Mammary epithelial cell (primary cell): ENCODE measurements at regions of chr11 and their contacts with region 1.

Region 1: DNA sequence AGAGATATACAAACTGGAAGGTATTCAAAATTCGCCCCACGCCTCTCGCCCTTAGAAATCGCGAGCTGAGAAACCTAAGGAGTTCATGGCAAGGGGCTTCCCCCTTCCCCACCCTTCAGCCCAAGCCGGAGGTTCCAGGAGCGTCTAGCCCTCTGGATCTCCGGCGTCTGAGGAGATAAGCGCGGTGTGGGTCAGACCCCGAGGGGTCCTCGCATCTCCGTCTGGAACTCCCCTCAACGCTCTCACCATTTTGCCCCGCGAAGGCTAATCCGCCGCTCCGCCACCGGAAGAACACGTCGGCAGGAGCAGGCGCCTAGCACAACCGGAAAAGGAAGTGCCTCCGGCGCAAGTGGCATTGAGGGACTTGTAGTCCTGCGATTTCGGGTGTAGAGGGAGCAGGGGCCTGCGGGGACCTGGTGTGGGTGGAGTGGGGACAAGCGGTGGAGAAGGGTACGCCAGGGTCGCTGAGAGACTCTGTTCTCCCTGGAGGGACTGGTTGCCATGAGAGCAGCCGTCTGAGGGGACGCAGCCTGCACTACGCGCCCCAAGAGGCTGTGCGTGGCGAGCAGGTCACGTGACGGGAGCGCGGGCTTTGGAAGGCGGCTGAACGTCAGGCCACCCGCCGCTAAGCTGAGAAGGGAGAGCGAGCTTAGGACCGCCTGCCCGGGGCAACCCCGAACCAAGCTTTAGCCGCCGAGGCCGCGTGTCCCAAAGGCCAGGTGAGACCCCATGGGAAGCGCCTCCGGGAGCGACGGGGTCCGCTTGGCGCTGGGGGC is at the starts of genes FEN1 and TMEM258:
- DNase-seq: peak; percentile 95
- H3K4me3 ChIP-seq: peak within 1 kb of the TSS; percentile 63 to 93 (median 92)
- H3K27ac ChIP-seq: peak within 1 kb of the TSS; percentile 96
- H3K4me1 ChIP-seq: peaks cover 13% of the 10 kb centered on the region
- H3K27me3 ChIP-seq: no peaks in the 10 kb centered on the region
- CTCF ChIP-seq: no peak
- total RNA-seq, gene FEN1: 11.7 to 46.1 TPM
- total RNA-seq, gene TMEM258: 48.2 to 99.7 TPM

Region 2: GRCh38 chr11:61541598-61541997 is 250.9 kb before region 1 on chr11:
- CTCF ChIA-PET with region 1: no interaction called
- dilution Hi-C with region 1: no loop called
- in situ Hi-C with region 1: no loop called
- intact Hi-C with region 1: no loop called
- DNase-seq: no peak
- H3K4me3 ChIP-seq: no peak overlapping the region
- H3K27ac ChIP-seq: no peak overlapping the region
- H3K4me1 ChIP-seq: no peaks in the 10 kb centered on the region
- H3K27me3 ChIP-seq: no peaks in the 10 kb centered on the region
- CTCF ChIP-seq: no peak

Region 3: DNA sequence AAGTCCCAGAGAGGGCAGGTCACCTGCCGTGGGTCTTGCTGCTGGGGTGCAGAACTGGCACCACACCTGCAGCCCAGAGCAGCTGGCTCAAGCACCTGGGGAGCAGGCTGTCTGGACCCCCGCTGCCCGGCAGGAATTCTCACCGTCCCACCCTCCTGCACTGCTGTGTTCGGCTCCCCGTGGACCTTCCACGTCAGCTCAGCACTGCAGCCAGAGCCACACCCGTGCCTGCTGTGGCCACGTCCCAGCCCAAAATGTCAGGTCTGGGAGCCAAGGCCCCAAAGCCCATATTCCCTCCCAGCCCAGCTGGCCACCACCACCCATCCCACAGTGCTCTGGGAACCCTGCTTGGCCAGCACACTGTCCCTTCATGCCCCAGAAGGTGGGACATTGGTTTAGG is 68.1 kb before region 1 on chr11:
- CTCF ChIA-PET with region 1: no interaction called
- dilution Hi-C with region 1: loop called (anchors 5 kb)
- in situ Hi-C with region 1: no loop called
- intact Hi-C with region 1: no loop called
- DNase-seq: no peak
- H3K4me3 ChIP-seq: no peak overlapping the region
- H3K27ac ChIP-seq: no peak overlapping the region
- H3K4me1 ChIP-seq: peaks cover 27% of the 10 kb centered on the region
- H3K27me3 ChIP-seq: no peaks in the 10 kb centered on the region
- CTCF ChIP-seq: no peak

Region 4: DNA sequence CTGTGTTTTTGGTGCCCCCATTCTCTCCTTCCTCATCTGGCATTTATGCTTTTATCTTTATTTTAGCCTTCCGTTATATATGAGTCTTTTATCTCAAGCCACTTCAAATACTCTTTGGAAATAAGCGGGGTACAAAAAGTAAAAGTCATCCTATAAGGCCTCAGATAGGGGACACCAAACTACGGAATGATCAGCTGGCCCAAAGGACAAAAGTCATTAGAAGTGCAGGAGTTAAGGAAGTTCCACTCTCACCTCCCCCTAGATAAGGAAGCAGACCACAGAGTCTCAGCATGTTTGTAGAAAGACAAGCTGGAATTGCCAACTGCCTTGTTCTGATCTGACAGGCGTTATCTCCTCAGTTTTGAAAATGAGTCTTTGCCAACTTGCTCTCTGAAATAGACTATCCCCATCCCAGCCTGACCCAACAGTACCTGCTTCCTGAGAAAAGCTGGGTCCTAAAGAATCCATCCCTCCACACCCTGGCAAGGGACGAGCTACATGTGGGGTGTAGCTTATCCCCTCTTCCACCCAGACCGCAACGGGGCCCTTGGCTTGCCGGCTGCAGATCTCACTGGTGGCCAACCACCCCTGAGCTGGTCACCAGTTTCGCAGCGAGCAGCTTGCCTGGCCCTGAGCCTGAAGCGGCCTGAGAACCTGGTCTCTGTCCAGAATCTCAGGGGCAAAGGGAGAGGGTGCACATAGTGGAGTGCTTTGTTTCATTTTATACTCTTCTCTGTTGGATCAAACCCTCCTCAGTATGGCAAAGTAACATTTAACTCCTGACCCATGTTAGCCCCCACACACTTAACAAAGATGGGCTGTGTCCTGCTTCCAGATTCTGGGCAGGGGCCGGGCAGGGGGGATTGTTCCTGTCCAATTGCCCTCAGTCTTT is 49.4 kb after region 1 on chr11:
- CTCF ChIA-PET with region 1: no interaction called
- dilution Hi-C with region 1: no loop called
- in situ Hi-C with region 1: no loop called
- intact Hi-C with region 1: no loop called
- DNase-seq: no peak
- H3K4me3 ChIP-seq: no peak overlapping the region
- H3K27ac ChIP-seq: no peak overlapping the region
- H3K4me1 ChIP-seq: no peaks in the 10 kb centered on the region
- H3K27me3 ChIP-seq: no peaks in the 10 kb centered on the region
- CTCF ChIP-seq: no peak

Region 5: DNA sequence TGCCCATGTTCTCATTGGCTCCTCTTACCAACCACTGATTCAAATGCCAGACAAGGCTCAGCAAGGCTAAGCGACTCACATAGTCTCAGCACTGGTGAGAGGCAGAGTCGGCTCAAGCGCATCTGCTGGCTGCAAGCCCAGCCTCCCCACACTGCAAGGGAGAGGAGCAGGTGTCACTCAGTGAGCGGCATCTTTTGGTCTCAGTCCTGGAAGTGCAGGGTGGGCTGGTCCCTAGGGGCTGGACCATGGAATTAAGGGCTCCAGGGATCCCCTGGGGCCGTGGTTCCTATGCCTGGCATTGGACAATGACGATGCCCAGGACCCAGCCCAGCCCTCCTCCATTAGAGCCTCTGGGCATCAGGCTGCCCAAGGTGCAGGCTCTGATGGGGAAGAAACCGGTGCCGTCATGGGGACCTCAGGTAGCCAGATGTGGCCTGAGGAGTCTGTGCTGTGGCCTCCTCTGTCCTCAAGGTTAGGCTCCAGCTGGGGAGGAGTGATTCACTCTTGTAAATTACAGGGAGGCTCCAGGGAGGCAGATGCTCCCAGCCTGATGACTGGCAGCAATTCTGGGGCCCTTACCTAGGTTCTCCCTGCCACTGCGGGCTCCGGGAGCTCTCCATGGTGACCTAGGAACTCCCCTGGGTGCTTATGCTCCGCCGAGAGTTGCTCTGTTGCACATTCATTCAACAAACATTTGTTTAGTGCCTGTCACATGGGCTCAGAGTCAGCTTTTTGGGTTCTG is 63.6 kb after region 1 on chr11:
- CTCF ChIA-PET with region 1: no interaction called
- dilution Hi-C with region 1: no loop called
- in situ Hi-C with region 1: no loop called
- intact Hi-C with region 1: no loop called
- DNase-seq: no peak
- H3K4me3 ChIP-seq: no peak overlapping the region
- H3K27ac ChIP-seq: no peak overlapping the region
- H3K4me1 ChIP-seq: no peaks in the 10 kb centered on the region
- H3K27me3 ChIP-seq: no peaks in the 10 kb centered on the region
- CTCF ChIP-seq: no peak

Region 6: GRCh38 chr11:61871158-61871597 is 78.7 kb after region 1 on chr11:
- CTCF ChIA-PET with region 1: no interaction called
- dilution Hi-C with region 1: no loop called
- in situ Hi-C with region 1: no loop called
- intact Hi-C with region 1: loop called (anchors 1 kb)
- DNase-seq: peak; percentile 68
- H3K4me3 ChIP-seq: no peak overlapping the region
- H3K27ac ChIP-seq: no peak overlapping the region
- H3K4me1 ChIP-seq: peaks cover 10% of the 10 kb centered on the region
- H3K27me3 ChIP-seq: no peaks in the 10 kb centered on the region
- CTCF ChIP-seq: peak; percentile 82 to 95

Region 7: GRCh38 chr11:61947486-61948210 is 155.2 kb after region 1 on chr11:
- CTCF ChIA-PET with region 1: interaction called, 7 read pairs
- dilution Hi-C with region 1: no loop called
- in situ Hi-C with region 1: loop called in 1 of 2 experiments (anchors 5 kb)
- intact Hi-C with region 1: loop called (anchors 1 kb)
- DNase-seq: peak; percentile 59
- H3K4me3 ChIP-seq: no peak overlapping the region
- H3K27ac ChIP-seq: no peak overlapping the region
- H3K4me1 ChIP-seq: no peaks in the 10 kb centered on the region
- H3K27me3 ChIP-seq: no peaks in the 10 kb centered on the region
- CTCF ChIP-seq: peak; percentile 97 to 98

Region 8: DNA sequence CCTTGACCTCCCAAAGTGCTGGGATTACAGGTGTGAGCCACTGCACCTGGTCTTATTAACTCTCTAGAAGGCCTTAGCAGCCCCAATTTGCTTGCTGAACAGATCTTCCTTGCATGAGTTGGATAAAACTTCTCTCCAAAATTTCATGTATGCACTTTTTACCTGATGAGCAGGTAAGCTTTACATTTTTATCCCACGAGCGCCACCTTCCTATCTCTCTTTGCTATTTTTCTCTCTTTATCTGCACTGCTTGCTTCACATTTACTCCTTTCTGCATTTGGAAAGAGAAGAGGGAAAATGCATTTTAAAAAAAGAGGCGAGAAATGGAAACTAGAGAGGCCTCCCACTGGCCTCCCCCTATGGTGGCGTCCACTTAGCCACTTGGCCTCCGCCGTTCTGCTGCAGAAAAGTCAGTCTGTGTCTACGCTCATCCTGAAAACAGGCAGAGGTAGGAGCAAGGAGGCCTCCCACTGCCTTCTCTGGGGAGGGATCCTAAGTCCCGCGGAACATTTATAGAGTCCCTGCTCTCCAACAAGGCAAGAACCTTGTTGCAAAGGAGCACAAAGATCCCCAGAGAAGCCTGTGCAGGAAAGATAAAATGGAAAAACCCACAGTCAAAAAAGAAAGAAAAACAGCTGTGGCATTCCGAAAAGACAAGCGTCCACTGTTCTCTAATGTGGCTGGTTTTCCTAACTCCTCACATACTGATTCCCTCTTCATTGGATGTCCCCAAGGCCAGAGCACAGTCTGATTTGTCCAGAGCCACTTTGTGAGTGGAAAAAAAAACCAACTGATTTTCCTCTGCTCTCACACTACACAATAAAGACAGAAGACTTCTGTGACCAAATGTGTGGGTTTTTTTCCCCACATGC is 269.1 kb after region 1 on chr11:
- CTCF ChIA-PET with region 1: no interaction called
- dilution Hi-C with region 1: no loop called
- in situ Hi-C with region 1: loop called in 1 of 2 experiments (anchors 25 kb)
- intact Hi-C with region 1: loop called (anchors 1 kb)
- DNase-seq: peak; percentile 29
- H3K4me3 ChIP-seq: no peak overlapping the region
- H3K27ac ChIP-seq: no peak overlapping the region
- H3K4me1 ChIP-seq: no peaks in the 10 kb centered on the region
- H3K27me3 ChIP-seq: no peaks in the 10 kb centered on the region
- CTCF ChIP-seq: peak; percentile 36 to 51

Region 9: GRCh38 chr11:62705880-62706849 is 913.7 kb after region 1 on chr11:
- CTCF ChIA-PET with region 1: no interaction called
- dilution Hi-C with region 1: no loop called
- in situ Hi-C with region 1: loop called in 1 of 2 experiments (anchors 25 kb)
- intact Hi-C with region 1: no loop called
- DNase-seq: peak; percentile 91
- H3K4me3 ChIP-seq: peak overlapping the region; percentile 70 to 89 (median 85)
- H3K27ac ChIP-seq: peak overlapping the region; percentile 98
- H3K4me1 ChIP-seq: peaks cover 31% of the 10 kb centered on the region
- H3K27me3 ChIP-seq: no peaks in the 10 kb centered on the region
- CTCF ChIP-seq: no peak